ENCODE measurements at regions of chr1 and their contacts with region 1.

Region 1: DNA sequence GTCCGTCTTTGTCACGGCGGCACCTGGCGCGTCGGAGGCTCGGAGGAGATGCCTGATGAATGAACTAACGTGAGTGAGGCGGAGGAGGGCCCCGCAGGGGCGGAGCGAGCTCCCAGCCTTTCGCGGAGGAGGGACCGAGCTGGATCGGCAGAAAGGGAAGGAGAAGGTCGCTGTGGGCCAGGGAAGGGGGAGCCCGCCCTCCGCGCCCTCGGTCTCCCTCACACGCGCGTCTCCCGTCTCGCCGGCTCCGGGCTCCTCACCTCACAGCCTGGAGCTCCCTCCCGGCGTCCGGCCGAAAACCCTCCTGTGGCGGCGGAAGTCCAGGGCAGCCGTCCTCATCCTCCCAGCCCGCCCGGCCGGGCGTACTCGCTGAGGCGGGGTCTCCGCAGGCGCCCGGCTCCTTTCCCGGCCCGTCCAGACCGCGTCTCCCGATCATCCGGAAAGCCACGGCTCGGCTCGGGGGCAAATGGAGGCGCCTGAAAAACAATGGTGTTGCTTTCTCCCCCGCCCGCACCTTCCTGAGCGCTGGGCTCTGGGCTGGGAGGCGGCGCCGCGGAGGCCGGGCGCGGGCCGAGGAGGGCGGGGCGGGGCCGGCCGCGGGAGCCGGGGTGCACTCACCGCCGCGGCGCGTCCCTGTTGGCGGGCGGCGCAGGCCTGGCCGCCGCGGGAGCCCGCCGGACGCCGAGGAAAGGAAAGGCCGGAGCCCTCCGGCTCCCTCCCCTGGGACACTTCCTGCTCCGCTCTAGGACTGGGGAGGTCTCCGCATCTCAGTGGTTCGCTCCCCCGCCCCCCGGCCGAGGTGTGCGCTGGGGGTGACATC is at the start of gene ZNF496:
- DNase-seq: peak; percentile 97
- H3K4me3 Mint-ChIP-seq: peak within 1 kb of the TSS; percentile 93
- H3K27ac Mint-ChIP-seq: peak within 1 kb of the TSS; percentile 90
- H3K4me1 Mint-ChIP-seq: peaks cover 36% of the 10 kb centered on the region
- H3K27me3 Mint-ChIP-seq: no peaks in the 10 kb centered on the region
- CTCF ChIP-seq: no peak
- total RNA-seq, gene ZNF496: 58.0 and 67.2 TPM in 2 replicates

Region 2: GRCh38 chr1:246907472-246907871 is 423.9 kb before region 1 on chr1:
- CTCF ChIA-PET with region 1: interaction called, 4 read pairs
- POLR2A ChIA-PET with region 1: interaction called, 7 read pairs
- intact Hi-C with region 1: loop called (anchors 5 kb)
- DNase-seq: peak; percentile 78
- H3K4me3 Mint-ChIP-seq: no peak overlapping the region
- H3K27ac Mint-ChIP-seq: peak overlapping the region; percentile 25
- H3K4me1 Mint-ChIP-seq: no peaks in the 10 kb centered on the region
- H3K27me3 Mint-ChIP-seq: no peaks in the 10 kb centered on the region
- CTCF ChIP-seq: peak; percentile 74

Region 3: GRCh38 chr1:247007511-247008405 is 323.6 kb before region 1 on chr1 and contains the start of gene ZNF695:
- CTCF ChIA-PET with region 1: no interaction called
- POLR2A ChIA-PET with region 1: interaction called, 3 read pairs
- intact Hi-C with region 1: loop called (anchors 10 kb)
- DNase-seq: peak; percentile 100
- H3K4me3 Mint-ChIP-seq: peak within 1 kb of the TSS; percentile 96
- H3K27ac Mint-ChIP-seq: peak within 1 kb of the TSS; percentile 99
- H3K4me1 Mint-ChIP-seq: no peaks in the 10 kb centered on the region
- H3K27me3 Mint-ChIP-seq: no peaks in the 10 kb centered on the region
- CTCF ChIP-seq: no peak
- total RNA-seq, gene ZNF695: 8.7 and 13.8 TPM in 2 replicates

Region 4: GRCh38 chr1:247103859-247104591 is 227.4 kb before region 1 on chr1 and contains the start of gene ZNF669:
- CTCF ChIA-PET with region 1: no interaction called
- POLR2A ChIA-PET with region 1: interaction called, 5 read pairs
- intact Hi-C with region 1: loop called (anchors 5 kb)
- DNase-seq: peak; percentile 99
- H3K4me3 Mint-ChIP-seq: peak within 1 kb of the TSS; percentile 94
- H3K27ac Mint-ChIP-seq: peak within 1 kb of the TSS; percentile 93
- H3K4me1 Mint-ChIP-seq: peaks cover 6% of the 10 kb centered on the region
- H3K27me3 Mint-ChIP-seq: no peaks in the 10 kb centered on the region
- CTCF ChIP-seq: no peak
- total RNA-seq, gene ZNF669: 11.6 and 11.9 TPM in 2 replicates

Region 5: GRCh38 chr1:247317366-247318101 is 13.8 kb before region 1 on chr1:
- CTCF ChIA-PET with region 1: interaction called, 4 read pairs
- POLR2A ChIA-PET with region 1: interaction called, 23 read pairs
- intact Hi-C with region 1: no loop called
- DNase-seq: no peak
- H3K4me3 Mint-ChIP-seq: no peak overlapping the region
- H3K27ac Mint-ChIP-seq: peak overlapping the region; percentile 1
- H3K4me1 Mint-ChIP-seq: peaks cover 14% of the 10 kb centered on the region
- H3K27me3 Mint-ChIP-seq: no peaks in the 10 kb centered on the region
- CTCF ChIP-seq: no peak

Region 6: GRCh38 chr1:247407180-247407616 is 75.8 kb after region 1 on chr1:
- CTCF ChIA-PET with region 1: no interaction called
- POLR2A ChIA-PET with region 1: no interaction called
- intact Hi-C with region 1: no loop called
- DNase-seq: peak; percentile 31
- H3K4me3 Mint-ChIP-seq: no peak overlapping the region
- H3K27ac Mint-ChIP-seq: peak overlapping the region; percentile 26
- H3K4me1 Mint-ChIP-seq: peaks cover 14% of the 10 kb centered on the region
- H3K27me3 Mint-ChIP-seq: no peaks in the 10 kb centered on the region
- CTCF ChIP-seq: no peak

Region 7: DNA sequence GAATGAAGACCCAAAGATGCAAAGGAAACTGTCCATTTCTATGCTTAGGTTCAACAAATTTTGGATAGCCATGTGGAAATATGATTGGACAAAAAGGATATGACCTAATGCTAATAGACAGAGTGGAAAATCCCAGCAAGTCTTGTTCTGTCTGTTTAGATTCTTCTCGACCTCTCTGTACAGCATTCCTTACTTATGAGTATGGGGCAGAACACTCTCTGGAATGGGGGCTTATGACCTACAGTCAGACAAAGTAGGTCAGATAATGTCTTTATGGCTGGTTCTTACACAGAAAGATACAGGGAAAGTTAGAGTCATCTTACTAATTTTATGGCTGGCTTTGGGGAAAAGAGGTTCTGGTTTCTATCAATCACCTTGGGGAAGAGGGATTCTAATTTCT is 220.3 kb after region 1 on chr1:
- CTCF ChIA-PET with region 1: no interaction called
- POLR2A ChIA-PET with region 1: no interaction called
- intact Hi-C with region 1: no loop called
- DNase-seq: no peak
- H3K4me3 Mint-ChIP-seq: no peak overlapping the region
- H3K27ac Mint-ChIP-seq: no peak overlapping the region
- H3K4me1 Mint-ChIP-seq: peaks cover 6% of the 10 kb centered on the region
- H3K27me3 Mint-ChIP-seq: no peaks in the 10 kb centered on the region
- CTCF ChIP-seq: no peak

Measured in MCF 10A (cell line).